ENCODE measurements at regions of chr1 and their contacts with region 1.

Region 1: DNA sequence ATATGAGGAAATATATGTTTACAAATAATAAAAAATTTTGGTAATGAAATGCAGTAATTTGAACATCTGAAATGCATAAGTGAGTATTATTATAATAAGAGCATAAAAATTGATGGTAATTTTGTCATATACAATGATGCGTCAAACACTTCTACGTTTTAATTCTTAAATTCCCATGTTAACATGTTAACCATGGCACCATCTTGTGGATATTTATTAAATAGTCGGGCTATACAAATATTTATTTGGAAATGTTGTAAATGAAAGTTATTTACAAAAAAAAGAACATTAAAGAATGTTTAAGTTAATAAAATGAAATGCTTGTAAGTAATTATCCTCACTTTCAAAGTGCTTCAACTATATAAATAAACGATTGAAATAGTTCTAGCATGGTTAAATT is 57.2 kb upstream of the C1orf185 start:
- DNase-seq: peak in 2 of 4 experiments; percentile 17 to 21
- ATAC-seq: peak; percentile 65; the same call in 2 of the 3 replicates
- H3K4me3 ChIP-seq: no peak overlapping the region
- H3K27ac ChIP-seq: no peak overlapping the region
- H3K4me1 ChIP-seq: no peaks in the 10 kb centered on the region
- H3K27me3 ChIP-seq: no peaks in the 10 kb centered on the region
- CTCF ChIP-seq: peak; percentile 10 to 76 (median 26); a peak in 3 of 6 replicates
- EP300 ChIP-seq: no peak
- POLR2A ChIP-seq: no peak
- RAD21 ChIP-seq: peak; percentile 71 to 76

Region 2: GRCh38 chr1:50929376-50929958 is 115.4 kb before region 1 on chr1:
- CTCF ChIA-PET with region 1: interaction called, 10 read pairs
- POLR2A ChIA-PET with region 1: no interaction called
- in situ Hi-C with region 1: no loop called
- intact Hi-C with region 1: loop called (anchors 1 kb)
- DNase-seq: peak in 2 of 4 experiments; percentile 21 to 41
- ATAC-seq: peak; percentile 67
- H3K4me3 ChIP-seq: no peak overlapping the region
- H3K27ac ChIP-seq: no peak overlapping the region
- H3K4me1 ChIP-seq: peaks cover 0 to 3% of the 10 kb centered on the region in 2 experiments; a peak in 1 of 5 replicates
- H3K27me3 ChIP-seq: no peaks in the 10 kb centered on the region
- CTCF ChIP-seq: peak; percentile 23 to 74 (median 41); a peak in 3 of 6 replicates
- EP300 ChIP-seq: no peak
- POLR2A ChIP-seq: no peak
- RAD21 ChIP-seq: peak; percentile 53 to 80

Region 3: GRCh38 chr1:51002516-51002915 is 42.3 kb before region 1 on chr1:
- CTCF ChIA-PET with region 1: no interaction called
- POLR2A ChIA-PET with region 1: no interaction called
- in situ Hi-C with region 1: no loop called
- intact Hi-C with region 1: no loop called
- DNase-seq: no peak
- ATAC-seq: no peak
- H3K4me3 ChIP-seq: no peak overlapping the region
- H3K27ac ChIP-seq: no peak overlapping the region
- H3K4me1 ChIP-seq: peaks cover 0 to 9% of the 10 kb centered on the region in 2 experiments; a peak in 3 of 5 replicates
- H3K27me3 ChIP-seq: no peaks in the 10 kb centered on the region
- CTCF ChIP-seq: no peak
- EP300 ChIP-seq: no peak
- POLR2A ChIP-seq: no peak
- RAD21 ChIP-seq: no peak

Measured in K562 (cell line).